ENCODE measurements at regions of chr1 and their contacts with region 1.

Region 1: DNA sequence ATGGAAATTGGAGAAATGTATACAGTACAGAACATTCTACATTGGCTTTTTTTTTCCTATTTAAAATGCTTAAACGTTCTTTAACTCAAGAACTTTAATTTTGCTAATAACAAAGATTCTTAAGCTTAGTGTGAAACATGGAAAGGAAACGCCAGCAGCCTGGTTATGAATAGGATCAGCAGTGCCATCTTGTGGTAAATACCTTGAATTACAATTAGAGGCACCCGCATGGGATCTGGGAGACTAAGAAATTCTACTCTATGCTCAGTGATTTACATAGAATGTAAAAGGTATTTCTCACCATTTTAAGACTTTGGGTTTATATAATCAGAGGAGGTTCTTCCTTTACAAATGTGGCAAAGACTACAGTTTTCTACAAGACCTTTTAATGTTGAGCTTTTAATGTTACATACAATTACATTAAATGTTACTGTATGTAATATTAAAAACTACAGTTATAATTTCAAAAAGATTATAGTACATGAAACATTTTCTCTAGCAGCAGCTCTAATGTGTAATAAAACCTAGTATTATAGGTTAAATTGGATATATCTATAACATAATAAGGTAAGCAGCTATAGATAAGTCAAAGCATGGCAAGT is 32.1 kb upstream of the APOBEC4 start:
- DNase-seq: peak; percentile 41
- H3K4me3 Mint-ChIP-seq: no peak overlapping the region
- H3K27ac Mint-ChIP-seq: no peak overlapping the region
- H3K4me1 Mint-ChIP-seq: peaks cover 8% of the 10 kb centered on the region
- H3K27me3 Mint-ChIP-seq: no peaks in the 10 kb centered on the region

Region 2: GRCh38 chr1:183281553-183282091 is 403.6 kb before region 1 on chr1:
- CTCF ChIA-PET with region 1: interaction called, 16 read pairs
- intact Hi-C with region 1: loop called (anchors 1 kb)
- DNase-seq: peak; percentile 88
- H3K4me3 Mint-ChIP-seq: no peak overlapping the region
- H3K27ac Mint-ChIP-seq: no peak overlapping the region
- H3K4me1 Mint-ChIP-seq: no peaks in the 10 kb centered on the region
- H3K27me3 Mint-ChIP-seq: no peaks in the 10 kb centered on the region

Region 3: GRCh38 chr1:183543619-183544204 is 141.5 kb before region 1 on chr1:
- CTCF ChIA-PET with region 1: interaction called, 3 read pairs
- intact Hi-C with region 1: loop called (anchors 5 kb)
- DNase-seq: no peak
- H3K4me3 Mint-ChIP-seq: no peak overlapping the region
- H3K27ac Mint-ChIP-seq: peak overlapping the region; percentile 43
- H3K4me1 Mint-ChIP-seq: no peaks in the 10 kb centered on the region
- H3K27me3 Mint-ChIP-seq: no peaks in the 10 kb centered on the region

Region 4: DNA sequence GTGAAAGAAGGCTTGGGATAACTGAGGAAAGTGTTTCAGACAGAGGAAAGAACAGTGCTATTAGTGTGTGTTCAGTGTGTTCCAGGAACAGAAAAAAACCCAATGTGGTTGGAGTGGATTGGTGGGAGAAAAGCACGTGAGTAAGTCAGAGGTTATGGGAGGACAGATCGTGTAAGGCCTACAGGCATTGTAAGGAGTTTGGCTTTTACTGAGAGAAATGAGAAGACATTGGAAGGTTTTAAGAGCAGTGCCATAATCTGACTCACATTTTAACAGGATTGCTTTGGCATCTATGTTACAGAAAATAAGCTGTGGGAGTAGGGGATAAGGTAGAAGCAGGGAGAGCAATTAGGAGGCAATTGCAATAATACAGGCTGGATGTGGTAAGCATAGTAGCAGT is 54.5 kb before region 1 on chr1:
- CTCF ChIA-PET with region 1: interaction called, 12 read pairs
- intact Hi-C with region 1: loop called (anchors 1 kb)
- DNase-seq: peak; percentile 8
- H3K4me3 Mint-ChIP-seq: peak overlapping the region; percentile 30
- H3K27ac Mint-ChIP-seq: peak overlapping the region; percentile 54
- H3K4me1 Mint-ChIP-seq: peaks cover 35% of the 10 kb centered on the region
- H3K27me3 Mint-ChIP-seq: no peaks in the 10 kb centered on the region

Region 5: GRCh38 chr1:183670178-183670577 is 15.0 kb before region 1 on chr1:
- CTCF ChIA-PET with region 1: interaction called, 27 read pairs
- intact Hi-C with region 1: no loop called
- DNase-seq: no peak
- H3K4me3 Mint-ChIP-seq: no peak overlapping the region
- H3K27ac Mint-ChIP-seq: no peak overlapping the region
- H3K4me1 Mint-ChIP-seq: no peaks in the 10 kb centered on the region
- H3K27me3 Mint-ChIP-seq: no peaks in the 10 kb centered on the region

Measured in activated naive CD4-positive, alpha-beta T cell treated with anti-CD3 and anti-CD28 coated beads for 36 hours (primary cell).